Naive thymus-derived CD8-positive, alpha-beta T cell (primary cell): ENCODE measurements at regions of chr19 and their contacts with region 1.

Region 1: DNA sequence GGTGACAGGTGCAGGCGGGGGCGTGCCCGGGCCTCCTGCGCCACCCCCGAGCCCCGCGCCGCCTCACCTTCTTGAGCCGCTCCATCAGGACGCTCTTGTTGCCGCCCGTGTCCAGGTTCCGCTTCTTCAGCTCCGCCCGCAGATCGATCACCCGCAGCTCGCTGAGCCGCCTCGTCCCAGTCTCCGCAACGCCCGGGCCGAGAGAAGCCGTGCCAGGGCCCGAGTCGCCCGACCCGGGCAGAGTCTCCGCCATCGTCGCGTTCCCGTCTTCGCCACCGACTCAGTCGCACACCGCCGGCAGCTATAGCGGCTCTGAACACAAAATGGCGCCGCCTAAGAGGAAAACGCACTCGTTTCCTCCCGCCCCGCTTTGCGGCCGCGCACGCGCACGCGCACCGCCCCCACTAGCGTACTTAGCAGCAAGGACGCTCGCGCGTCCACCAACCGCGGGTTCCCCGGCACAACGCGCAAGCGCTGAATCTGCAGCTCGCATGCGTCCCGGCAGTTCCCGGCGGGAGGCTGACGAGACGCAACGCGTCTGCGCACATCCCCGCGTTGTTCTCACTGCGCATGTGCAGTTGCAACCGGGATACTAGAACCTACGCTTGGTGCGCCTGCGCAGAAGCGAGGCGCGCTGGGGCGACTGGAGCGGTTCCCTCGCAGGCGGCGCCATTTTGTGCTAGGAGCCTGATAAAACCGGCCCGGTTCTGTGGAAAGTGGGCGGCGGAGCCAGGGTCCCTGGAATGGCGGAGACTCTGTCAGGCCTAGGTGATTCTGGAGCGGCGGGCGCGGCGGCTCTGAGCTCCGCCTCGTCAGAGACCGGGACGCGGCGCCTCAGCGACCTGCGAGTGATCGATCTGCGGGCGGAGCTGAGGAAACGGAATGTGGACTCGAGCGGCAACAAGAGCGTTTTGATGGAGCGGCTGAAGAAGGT is at the starts of genes SAFB and SAFB2:
- DNase-seq: peak; percentile 95 to 100 (median 100)
- ATAC-seq: peak; percentile 79 to 82
- H3K4me3 Mint-ChIP-seq: peak within 1 kb of the TSS; percentile 99 to 100 (median 100)
- H3K27ac Mint-ChIP-seq: peak within 1 kb of the TSS; percentile 99 to 100 (median 100)
- H3K4me1 Mint-ChIP-seq: peaks cover 46 to 82% (median 74%) of the 10 kb centered on the region in 4 donors
- H3K27me3 Mint-ChIP-seq: peaks cover 0 to 3% (median 0%) of the 10 kb centered on the region in 5 donors
- polyA plus RNA-seq, gene SAFB: 28.6 to 135 (median 59.3) TPM
- polyA plus RNA-seq, gene SAFB2: 25.8 to 47.4 (median 28.7) TPM

Region 2: DNA sequence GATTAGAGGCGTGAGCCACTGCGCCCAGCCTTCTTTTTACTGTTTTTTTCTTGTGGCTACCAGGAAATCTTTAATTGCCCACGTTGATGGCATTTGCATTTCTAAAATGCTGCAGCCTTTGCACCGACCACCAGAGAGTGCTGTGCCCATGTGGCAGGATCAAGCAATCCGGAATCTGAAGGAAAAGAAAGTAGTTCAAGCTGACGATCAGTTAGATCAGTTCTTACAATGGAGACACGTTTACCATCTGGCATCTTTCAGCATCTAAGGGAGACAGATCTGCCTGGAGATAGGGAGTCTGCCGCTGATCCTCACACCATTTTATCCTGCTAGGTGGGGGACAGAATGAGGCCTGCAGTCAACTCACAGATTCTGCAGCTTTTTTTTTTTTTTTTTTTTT is 74.8 kb before region 1 on chr19:
- POLR2A ChIA-PET with region 1: no interaction called
- DNase-seq: peak in 3 of 10 donors; percentile 16 to 29 (median 26)
- ATAC-seq: peak; percentile 37 to 45
- H3K4me3 Mint-ChIP-seq: no peak overlapping the region
- H3K27ac Mint-ChIP-seq: peak overlapping the region in 1 of 10 donors; percentile 60
- H3K4me1 Mint-ChIP-seq: peaks cover 0 to 6% (median 1%) of the 10 kb centered on the region in 4 donors
- H3K27me3 Mint-ChIP-seq: peaks cover 0 to 21% (median 10%) of the 10 kb centered on the region in 5 donors

Region 3: DNA sequence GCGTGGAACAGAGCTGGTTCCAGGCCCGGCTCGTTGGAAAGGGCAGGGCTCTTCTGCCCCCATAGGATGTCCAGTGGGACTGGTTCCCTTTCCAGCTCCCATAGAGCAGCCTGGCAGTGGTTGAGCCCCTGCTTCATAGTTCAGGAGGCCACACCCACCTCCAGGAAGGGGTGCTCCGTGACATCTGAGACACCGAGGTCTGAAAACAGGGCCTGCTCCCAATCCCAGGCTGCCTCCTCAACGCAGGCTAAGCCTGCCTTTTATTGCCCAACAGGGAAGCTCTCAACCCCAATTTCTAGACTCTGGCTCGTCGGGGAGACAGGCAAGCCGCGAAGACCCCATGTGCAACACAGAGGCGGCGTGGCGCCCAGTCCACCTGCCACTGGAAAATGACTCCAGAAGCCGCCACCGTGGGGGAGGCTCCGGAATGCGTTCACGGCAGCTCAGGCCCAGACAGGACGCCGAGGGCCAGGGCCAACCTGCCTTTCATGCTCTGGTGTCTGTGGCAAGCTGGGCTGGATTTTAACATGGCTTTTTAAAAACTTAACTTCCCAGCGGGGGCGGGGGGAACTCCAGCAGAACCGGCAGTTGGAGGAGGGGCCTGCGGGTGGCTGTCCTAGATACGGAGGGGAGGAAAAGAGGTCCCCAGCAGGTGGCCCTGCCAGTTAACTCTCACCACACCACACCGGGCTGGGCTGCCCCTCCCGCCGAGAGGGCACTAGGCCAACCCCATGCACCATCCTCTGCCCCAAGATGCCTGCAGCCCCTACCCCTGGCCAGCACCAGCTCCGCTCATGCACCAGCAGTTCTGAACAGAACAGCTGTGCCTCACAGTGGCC is 37.0 kb before region 1 on chr19:
- POLR2A ChIA-PET with region 1: interaction called, 10 read pairs
- DNase-seq: peak in 7 of 10 donors; percentile 20 to 52 (median 38)
- ATAC-seq: peak; percentile 61 to 76
- H3K4me3 Mint-ChIP-seq: peak overlapping the region in 9 of 10 donors; percentile 36 to 82 (median 70)
- H3K27ac Mint-ChIP-seq: peak overlapping the region; percentile 37 to 95 (median 80)
- H3K4me1 Mint-ChIP-seq: peaks cover 8 to 22% (median 15%) of the 10 kb centered on the region in 4 donors
- H3K27me3 Mint-ChIP-seq: no peaks in the 10 kb centered on the region

Region 4: GRCh38 chr19:5690125-5690954 is 67.6 kb after region 1 on chr19 and contains the start of gene RPL36:
- POLR2A ChIA-PET with region 1: interaction called, 41 read pairs
- DNase-seq: peak; percentile 96 to 99 (median 98)
- ATAC-seq: peak; percentile 58 to 65
- H3K4me3 Mint-ChIP-seq: peak within 1 kb of the TSS; percentile 90 to 99 (median 94)
- H3K27ac Mint-ChIP-seq: peak within 1 kb of the TSS; percentile 90 to 99 (median 96)
- H3K4me1 Mint-ChIP-seq: peaks cover 19 to 43% (median 36%) of the 10 kb centered on the region in 4 donors
- H3K27me3 Mint-ChIP-seq: no peaks in the 10 kb centered on the region
- polyA plus RNA-seq, gene RPL36: 2,357 to 2,883 (median 2,631) TPM

Region 5: GRCh38 chr19:5719961-5720790 is 97.4 kb after region 1 on chr19 and contains the starts of genes CATSPERD and LONP1:
- POLR2A ChIA-PET with region 1: interaction called, 24 read pairs
- DNase-seq: peak; percentile 96 to 99 (median 98)
- ATAC-seq: peak; percentile 84 to 90
- H3K4me3 Mint-ChIP-seq: peak within 1 kb of the TSS; percentile 88 to 96 (median 90)
- H3K27ac Mint-ChIP-seq: peak within 1 kb of the TSS; percentile 94 to 98 (median 96)
- H3K4me1 Mint-ChIP-seq: peaks cover 8 to 35% (median 20%) of the 10 kb centered on the region in 4 donors
- H3K27me3 Mint-ChIP-seq: peaks cover 0 to 4% (median 1%) of the 10 kb centered on the region in 5 donors
- polyA plus RNA-seq, gene CATSPERD: not detected
- polyA plus RNA-seq, gene LONP1: 19.9 to 45.5 (median 21.6) TPM